ENCODE measurements at regions of chr11 and their contacts with region 1.

Region 1: DNA sequence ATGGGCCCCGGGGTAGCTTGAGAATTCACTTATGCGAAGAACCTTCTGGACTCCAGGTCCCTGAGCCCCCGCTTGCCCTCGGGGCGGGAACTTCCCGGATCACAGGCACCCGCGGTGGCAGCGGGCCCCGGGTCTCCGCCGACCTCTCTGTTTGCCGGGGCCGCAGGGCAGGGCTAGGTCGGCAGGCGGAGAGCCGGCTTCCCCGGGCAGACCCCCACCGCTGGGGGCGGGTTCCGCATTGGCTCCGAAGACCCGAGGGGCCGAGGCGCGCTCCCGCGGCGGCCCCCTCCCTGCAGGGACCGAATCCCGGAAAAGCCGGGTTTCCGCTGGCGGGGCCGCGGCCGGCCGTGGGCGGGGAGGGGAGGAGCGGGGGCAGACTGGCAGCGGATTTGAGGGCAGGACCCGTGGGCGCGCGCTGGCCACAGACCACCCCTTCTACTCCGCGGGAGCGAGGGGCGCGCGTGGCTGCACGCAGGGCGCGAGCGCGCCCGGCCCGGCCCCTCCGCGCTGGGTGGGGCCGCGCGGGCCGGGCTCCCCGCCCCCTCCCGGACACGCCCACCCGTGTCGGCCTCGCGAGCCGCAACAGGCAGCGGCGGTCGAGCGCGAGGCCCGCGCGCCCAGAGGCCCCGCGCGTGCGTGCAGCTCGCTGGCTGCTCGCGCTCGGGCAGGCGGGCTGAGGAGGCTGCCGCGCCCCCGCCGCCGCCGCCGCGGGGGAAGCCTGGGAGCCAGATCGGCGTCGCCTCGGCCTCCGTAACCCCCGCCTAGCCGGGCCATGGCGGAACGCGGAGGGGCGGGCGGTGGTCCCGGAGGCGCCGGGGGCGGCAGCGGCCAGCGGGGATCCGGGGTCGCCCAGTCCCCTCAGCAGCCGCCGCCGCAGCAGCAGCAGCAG is at the start of gene PACS1:
- DNase-seq: peak; percentile 78
- H3K4me3 ChIP-seq: peak within 1 kb of the TSS; percentile 83
- H3K27ac ChIP-seq: peak within 1 kb of the TSS; percentile 73
- H3K4me1 ChIP-seq: peaks cover 50% of the 10 kb centered on the region
- CTCF ChIP-seq: peak; percentile 13; the same call in 1 of the 2 replicates
- total RNA-seq, gene PACS1: 21.2 and 23.7 TPM in 2 replicates

Region 2: DNA sequence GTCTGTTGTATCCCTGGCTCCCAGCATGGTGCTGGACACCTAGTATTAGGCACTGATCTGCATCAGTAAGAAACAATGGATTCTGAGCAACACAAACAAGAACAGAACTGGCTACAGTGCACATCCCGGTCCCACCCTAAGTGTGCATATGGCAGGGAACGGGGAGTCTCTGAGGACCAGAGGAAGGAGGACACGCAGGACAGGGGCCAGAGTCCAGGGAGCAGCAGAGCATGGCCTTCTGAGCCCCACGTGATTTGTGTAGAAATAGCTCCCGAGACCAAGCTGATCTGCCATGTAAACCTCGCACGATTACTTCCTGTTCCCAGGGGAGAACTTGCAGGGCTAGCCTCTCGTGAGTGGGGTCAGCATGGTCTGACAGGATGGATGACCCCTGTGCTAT is 248.8 kb before region 1 on chr11:
- CTCF ChIA-PET with region 1: no interaction called
- POLR2A ChIA-PET with region 1: no interaction called
- intact Hi-C with region 1: no loop called
- DNase-seq: no peak
- H3K4me3 ChIP-seq: no peak overlapping the region
- H3K27ac ChIP-seq: no peak overlapping the region
- H3K4me1 ChIP-seq: peaks cover 5% of the 10 kb centered on the region
- CTCF ChIP-seq: no peak

Region 3: DNA sequence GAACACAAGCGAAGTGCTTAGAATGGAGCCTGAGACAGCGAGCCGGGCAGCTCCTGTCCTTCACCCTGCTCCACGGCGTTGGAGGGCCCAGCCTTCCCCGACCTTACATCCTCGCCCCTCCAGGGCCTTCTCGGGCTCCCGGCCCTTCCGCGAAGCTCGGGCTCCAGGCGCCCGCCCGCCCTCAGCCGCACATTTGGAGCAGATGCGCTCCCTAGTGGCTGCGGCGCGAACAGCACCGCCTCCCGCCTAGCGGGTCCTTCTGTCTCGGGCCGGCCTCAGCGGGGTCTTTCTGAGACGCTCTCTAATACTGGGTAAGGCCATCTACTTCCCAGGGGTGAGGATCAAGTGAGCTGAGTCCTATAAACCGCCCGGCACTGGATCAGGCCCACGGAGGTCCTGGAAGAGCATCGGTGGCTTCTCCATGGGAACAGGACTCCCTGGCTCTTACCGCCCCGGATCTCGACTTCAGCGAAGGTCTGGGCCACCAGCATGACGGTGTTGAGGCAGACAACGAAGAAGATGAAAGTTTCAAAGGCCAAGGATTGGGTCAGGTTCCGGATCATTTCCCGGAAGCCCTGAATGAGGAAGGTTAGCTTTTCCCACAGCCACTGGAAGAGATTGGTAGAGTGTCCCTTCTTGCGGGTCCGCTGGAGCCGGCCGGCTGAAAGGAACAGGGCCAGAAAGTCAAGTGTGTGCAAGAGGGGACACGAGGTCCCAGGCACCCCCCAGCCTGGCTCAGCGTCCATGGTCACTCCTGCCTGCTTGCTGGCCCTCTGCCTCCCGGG is 47.4 kb before region 1 on chr11:
- CTCF ChIA-PET with region 1: no interaction called
- POLR2A ChIA-PET with region 1: no interaction called
- intact Hi-C with region 1: no loop called
- DNase-seq: peak; percentile 53
- H3K4me3 ChIP-seq: no peak overlapping the region
- H3K27ac ChIP-seq: no peak overlapping the region
- H3K4me1 ChIP-seq: no peaks in the 10 kb centered on the region
- CTCF ChIP-seq: peak; percentile 86

Region 4: DNA sequence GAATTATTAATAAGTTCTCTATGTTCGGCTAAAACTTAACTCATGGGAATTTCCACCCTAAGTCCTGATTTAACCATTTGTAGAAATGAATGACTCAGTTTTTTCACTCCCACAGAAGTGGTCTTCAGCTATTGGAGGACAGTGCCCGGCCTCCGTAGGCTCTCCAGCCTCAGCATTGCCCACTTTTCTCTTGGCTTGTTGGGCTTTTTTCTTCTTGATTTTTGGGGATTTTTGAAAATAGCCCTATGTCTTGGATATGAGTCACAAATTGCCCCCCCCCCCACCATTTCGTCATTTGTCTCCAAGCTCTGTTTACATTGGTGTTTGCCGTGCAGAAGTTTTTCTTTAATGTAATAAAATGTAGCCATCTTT is 66.8 kb after region 1 on chr11:
- CTCF ChIA-PET with region 1: interaction called, 3 read pairs
- POLR2A ChIA-PET with region 1: interaction called, 3 read pairs
- intact Hi-C with region 1: loop called (anchors 1 kb)
- DNase-seq: no peak
- H3K4me3 ChIP-seq: no peak overlapping the region
- H3K27ac ChIP-seq: no peak overlapping the region
- H3K4me1 ChIP-seq: peaks cover 59% of the 10 kb centered on the region
- CTCF ChIP-seq: no peak